ENCODE measurements at regions of chr16 and their contacts with region 1.

Region 1: GRCh38 chr16:89860747-89861304 is 12.6 kb upstream of the TCF25 start:
- DNase-seq: peak; percentile 83 to 84
- ATAC-seq: peak; percentile 80 to 85 (median 85)
- H3K4me3 ChIP-seq: no peak overlapping the region
- H3K4me3 Mint-ChIP-seq: peak overlapping the region; percentile 58
- H3K27ac ChIP-seq: no peak overlapping the region
- H3K27ac Mint-ChIP-seq: peak overlapping the region; percentile 81 to 84
- H3K4me1 ChIP-seq: peaks cover 50% of the 10 kb centered on the region
- H3K4me1 Mint-ChIP-seq: peaks cover 39 to 44% of the 10 kb centered on the region in 2 donors
- H3K27me3 ChIP-seq: no peaks in the 10 kb centered on the region
- H3K27me3 Mint-ChIP-seq: no peaks in the 10 kb centered on the region
- CTCF ChIP-seq: peak; percentile 97

Region 2: DNA sequence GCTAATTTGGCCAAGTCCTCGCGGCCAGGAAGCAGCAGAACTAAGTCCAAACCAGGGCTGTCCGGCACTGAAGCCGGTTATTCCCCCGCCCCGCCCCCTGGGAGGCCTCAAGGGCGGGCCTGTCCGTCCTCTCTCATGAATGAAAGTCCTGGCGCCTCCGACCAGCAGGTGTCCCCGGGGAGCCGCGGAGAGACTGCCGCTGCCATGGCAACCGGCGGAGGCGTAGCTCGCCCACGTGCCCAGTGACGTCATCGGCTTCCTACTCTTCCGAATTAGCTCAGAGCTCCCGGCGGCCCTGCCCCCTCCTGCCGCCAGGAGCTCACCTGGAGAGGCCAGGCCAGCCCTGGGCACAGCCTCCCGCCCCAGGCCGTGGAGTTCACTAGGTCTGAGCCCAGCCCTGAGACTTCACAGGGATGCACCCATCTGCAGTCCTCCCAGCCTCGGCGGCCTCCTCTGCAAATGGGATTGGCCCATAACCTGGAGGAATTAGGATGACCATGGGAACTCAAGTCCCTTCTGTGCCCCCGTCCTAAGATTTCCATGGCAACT is 160.7 kb before region 1 on chr16:
- intact Hi-C with region 1: loop called (anchors 2 kb)
- DNase-seq: peak; percentile 97 to 99
- ATAC-seq: peak; percentile 43 to 57 (median 49)
- H3K4me3 ChIP-seq: peak overlapping the region; percentile 38
- H3K4me3 Mint-ChIP-seq: peak overlapping the region; percentile 72
- H3K27ac ChIP-seq: peak overlapping the region; percentile 83
- H3K27ac Mint-ChIP-seq: peak overlapping the region; percentile 81 to 86
- H3K4me1 ChIP-seq: peaks cover 44% of the 10 kb centered on the region
- H3K4me1 Mint-ChIP-seq: peaks cover 12 to 32% of the 10 kb centered on the region in 2 donors
- H3K27me3 ChIP-seq: no peaks in the 10 kb centered on the region
- H3K27me3 Mint-ChIP-seq: no peaks in the 10 kb centered on the region
- CTCF ChIP-seq: peak; percentile 79

Region 3: GRCh38 chr16:89708441-89708931 is 152.3 kb before region 1 on chr16:
- intact Hi-C with region 1: loop called (anchors 1 kb)
- DNase-seq: no peak
- ATAC-seq: no peak
- H3K4me3 ChIP-seq: no peak overlapping the region
- H3K4me3 Mint-ChIP-seq: no peak overlapping the region
- H3K27ac ChIP-seq: no peak overlapping the region
- H3K27ac Mint-ChIP-seq: no peak overlapping the region
- H3K4me1 ChIP-seq: peaks cover 26% of the 10 kb centered on the region
- H3K4me1 Mint-ChIP-seq: peaks cover 6% of the 10 kb centered on the region in 2 donors
- H3K27me3 ChIP-seq: no peaks in the 10 kb centered on the region
- H3K27me3 Mint-ChIP-seq: no peaks in the 10 kb centered on the region
- CTCF ChIP-seq: no peak

Region 4: GRCh38 chr16:89764711-89765201 is 96.1 kb before region 1 on chr16:
- intact Hi-C with region 1: loop called (anchors 5 kb)
- DNase-seq: peak; percentile 54 to 67
- ATAC-seq: peak; percentile 85 to 88 (median 87)
- H3K4me3 ChIP-seq: peak overlapping the region; percentile 39
- H3K4me3 Mint-ChIP-seq: peak overlapping the region; percentile 93
- H3K27ac ChIP-seq: peak overlapping the region; percentile 83
- H3K27ac Mint-ChIP-seq: peak overlapping the region; percentile 95 to 98
- H3K4me1 ChIP-seq: peaks cover 52% of the 10 kb centered on the region
- H3K4me1 Mint-ChIP-seq: peaks cover 33 to 43% of the 10 kb centered on the region in 2 donors
- H3K27me3 ChIP-seq: no peaks in the 10 kb centered on the region
- H3K27me3 Mint-ChIP-seq: no peaks in the 10 kb centered on the region
- CTCF ChIP-seq: no peak

Region 5: DNA sequence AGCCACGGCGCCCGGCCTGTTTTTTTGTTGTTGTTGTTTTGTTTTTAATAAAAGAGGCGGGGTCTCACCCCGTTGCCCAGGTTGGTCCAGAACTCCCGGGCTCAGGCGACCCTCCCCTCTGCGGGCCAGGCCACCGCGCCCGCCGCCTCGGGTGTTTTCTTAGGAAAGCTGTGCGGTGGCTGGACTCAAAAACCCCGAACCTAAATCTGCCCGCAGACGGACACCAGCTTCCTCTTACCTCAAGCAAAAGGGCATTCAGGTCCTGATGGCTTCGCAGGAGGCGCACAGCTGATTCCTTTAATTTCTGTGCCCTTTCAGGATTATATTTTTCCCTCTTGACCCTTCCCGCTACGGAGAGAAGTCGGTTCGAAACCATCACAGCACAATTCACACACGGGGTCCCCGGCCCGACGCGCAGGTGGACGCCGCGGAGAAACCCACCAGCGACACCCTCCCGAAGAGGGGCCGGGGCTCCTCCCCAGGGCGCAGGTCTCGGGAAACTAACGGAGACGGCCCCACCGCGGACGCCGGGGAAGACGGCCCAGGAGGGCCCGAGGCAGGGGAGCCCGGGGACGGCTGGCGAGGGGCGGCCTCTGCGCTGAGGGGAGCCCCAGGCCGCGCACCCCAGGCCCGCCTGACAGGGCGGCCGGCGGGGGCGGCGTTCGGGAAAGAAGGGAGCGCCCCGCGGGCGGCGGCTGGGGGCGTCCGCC is 45.0 kb before region 1 on chr16:
- intact Hi-C with region 1: loop called (anchors 5 kb)
- DNase-seq: peak in 1 of 2 donors; percentile 23
- ATAC-seq: peak; percentile 2 to 9 (median 6)
- H3K4me3 ChIP-seq: peak overlapping the region; percentile 20
- H3K4me3 Mint-ChIP-seq: peak overlapping the region; percentile 73
- H3K27ac ChIP-seq: no peak overlapping the region
- H3K27ac Mint-ChIP-seq: no peak overlapping the region
- H3K4me1 ChIP-seq: peaks cover 17% of the 10 kb centered on the region
- H3K4me1 Mint-ChIP-seq: peaks cover 8 to 19% of the 10 kb centered on the region in 2 donors
- H3K27me3 ChIP-seq: no peaks in the 10 kb centered on the region
- H3K27me3 Mint-ChIP-seq: no peaks in the 10 kb centered on the region
- CTCF ChIP-seq: no peak

Measured in natural killer cell (primary cell).